ENCODE measurements at regions of chr16 and their contacts with region 1.

Region 1: DNA sequence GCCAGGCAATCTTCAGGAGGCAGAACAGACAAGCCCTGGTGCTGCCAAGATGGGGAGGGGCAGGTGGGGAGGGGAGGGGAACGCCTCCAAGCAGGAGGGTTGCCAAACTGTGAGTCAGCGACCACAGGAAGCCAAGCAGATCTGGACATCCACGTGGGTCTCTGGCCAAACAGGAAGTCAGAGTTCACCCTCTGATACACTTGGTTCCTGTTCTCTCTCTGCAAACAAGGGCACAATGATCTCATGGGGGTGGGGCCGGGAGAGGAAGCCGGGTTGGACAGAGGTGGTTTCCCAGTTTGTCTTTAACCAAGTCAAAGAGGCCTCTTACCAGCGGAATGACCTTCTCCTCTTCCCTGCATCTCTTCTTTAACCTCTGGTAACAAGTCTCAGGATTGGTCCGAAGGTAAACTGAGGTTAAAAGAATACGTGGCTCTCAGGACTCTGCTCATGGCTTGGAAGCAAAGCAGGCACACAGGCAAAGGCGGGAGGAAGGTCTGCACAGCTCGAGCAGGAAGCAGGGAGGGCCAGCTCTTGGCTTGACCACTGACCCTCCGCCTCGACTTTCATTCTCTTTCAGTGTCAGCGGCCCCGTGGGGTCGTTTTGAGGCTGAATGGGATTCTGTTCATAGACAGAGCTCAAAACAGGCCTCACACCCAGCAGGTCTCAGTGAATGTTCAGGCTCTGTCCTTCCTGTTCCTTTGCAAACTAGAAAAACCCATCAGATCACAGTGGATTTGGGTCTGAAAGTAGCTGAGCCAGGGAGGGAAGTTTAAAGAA is 32.9 kb downstream of the TK2 start:
- DNase-seq: peak; percentile 99

Region 2: GRCh38 chr16:66357153-66357928 is 159.7 kb before region 1 on chr16:
- intact Hi-C with region 1: loop called (anchors 2 kb)
- DNase-seq: no peak

Region 3: DNA sequence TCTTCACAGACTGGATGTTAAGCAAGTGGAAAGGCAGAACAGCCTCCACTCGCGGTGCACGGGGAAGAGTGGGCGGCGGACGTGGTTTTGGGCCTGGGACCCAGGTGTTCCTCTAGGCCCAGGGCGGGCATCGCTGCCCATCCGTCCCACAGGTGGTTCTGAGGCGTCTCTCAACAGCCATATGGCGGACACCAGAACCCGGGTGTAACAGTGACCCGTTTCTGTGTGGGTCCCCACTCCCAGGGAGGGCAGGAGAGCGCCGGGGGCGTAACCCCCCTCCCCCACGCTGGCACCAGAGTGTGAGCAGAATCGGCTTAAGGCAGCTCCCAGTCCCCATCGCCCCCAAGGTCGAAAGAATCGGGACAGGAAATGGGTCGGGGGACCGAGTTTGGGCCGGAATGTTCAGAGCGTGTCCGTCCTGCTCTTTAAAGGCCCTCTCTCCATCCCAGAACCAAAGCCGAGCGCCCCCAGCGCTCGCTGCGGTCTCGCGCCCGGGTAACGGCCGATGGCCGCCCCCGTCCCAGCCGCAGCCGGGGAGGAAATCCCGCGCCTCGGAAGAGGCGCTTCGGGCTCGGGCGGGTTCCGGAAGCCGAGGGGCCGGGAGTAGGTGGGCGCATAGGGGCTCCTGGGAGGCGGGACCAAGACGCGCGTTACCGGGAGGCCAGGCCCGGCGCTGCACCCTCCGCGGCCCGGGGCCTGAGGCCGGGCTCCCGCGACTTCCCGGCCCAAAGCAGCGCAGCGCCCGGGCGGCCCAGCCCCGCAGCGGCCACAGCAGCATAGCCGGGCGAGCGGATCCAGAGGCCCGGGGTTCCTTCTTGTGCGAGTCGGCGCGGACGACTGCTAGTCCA is 32.5 kb after region 1 on chr16 and contains the start of gene TK2:
- intact Hi-C with region 1: loop called (anchors 2 kb)
- DNase-seq: peak; percentile 88
- total RNA-seq, gene TK2: 23.4 TPM

Measured in cardiac septum (tissue), 1 donor.